Sigmoid colon (tissue), 7 donors: ENCODE measurements at regions of chr11 and their contacts with region 1.

Region 1: DNA sequence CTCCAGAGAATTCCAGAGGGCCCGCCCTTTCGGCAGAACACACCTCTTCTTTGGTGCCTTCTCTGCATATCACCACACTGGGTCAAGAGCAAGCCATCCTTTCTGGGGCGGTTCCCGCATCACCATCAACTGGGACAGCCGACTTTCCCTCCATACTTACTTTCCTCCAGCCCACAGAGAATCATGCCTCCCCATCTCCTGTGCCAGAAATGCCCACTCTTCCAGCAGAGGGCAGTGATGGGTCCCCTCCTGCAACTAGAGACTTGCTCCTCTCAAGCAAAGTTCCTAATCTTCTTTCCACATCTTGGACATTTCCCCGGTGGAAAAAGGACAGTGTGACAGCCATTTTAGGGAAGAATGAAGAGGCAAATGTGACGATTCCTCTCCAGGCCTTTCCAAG is 157.7 kb downstream of the C11orf91 start:
- DNase-seq: no peak
- H3K4me3 ChIP-seq: no peak overlapping the region
- H3K27ac ChIP-seq: no peak overlapping the region
- H3K4me1 ChIP-seq: no peaks in the 10 kb centered on the region
- H3K27me3 ChIP-seq: no peaks in the 10 kb centered on the region
- CTCF ChIP-seq: peak in 2 of 4 experiments; percentile 21 to 47
- EP300 ChIP-seq: no peak
- POLR2A ChIP-seq: no peak

Region 2: DNA sequence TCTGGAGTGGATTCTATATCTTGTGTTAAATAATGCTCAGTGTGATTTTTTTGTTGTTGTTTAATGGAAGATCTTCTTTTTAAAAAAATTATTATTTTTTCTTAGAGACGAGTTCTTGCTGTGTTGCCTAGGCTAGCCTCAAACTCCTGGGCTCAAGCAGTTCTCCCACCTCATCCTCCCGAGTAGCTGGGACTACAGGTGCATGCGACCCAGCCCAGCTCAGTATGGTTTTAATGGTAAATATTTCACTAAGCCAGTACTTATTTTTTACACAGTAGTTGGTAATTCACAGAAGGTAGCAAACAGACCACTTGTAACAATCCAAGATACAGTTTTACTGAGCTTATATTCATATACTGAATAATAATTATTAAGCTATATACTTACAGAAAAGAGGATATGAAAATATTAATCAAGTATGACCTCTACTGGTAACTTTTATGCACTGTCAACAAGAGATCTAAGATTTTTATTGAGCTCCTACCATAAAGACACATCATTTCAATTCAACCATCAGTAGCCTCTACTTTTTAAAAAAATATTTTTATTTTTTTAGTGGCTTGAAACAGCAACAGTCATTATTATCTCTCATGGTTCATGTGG is 199.4 kb after region 1 on chr11:
- intact Hi-C with region 1: loop called (anchors 5 kb)
- DNase-seq: no peak
- H3K4me3 ChIP-seq: no peak overlapping the region
- H3K27ac ChIP-seq: no peak overlapping the region
- H3K4me1 ChIP-seq: peaks cover 0 to 3% (median 2%) of the 10 kb centered on the region in 4 donors
- H3K27me3 ChIP-seq: no peaks in the 10 kb centered on the region
- CTCF ChIP-seq: peak in 3 of 4 experiments; percentile 9 to 55 (median 35)
- EP300 ChIP-seq: no peak
- POLR2A ChIP-seq: no peak